ENCODE measurements at regions of chr9 and their contacts with region 1.

Region 1: DNA sequence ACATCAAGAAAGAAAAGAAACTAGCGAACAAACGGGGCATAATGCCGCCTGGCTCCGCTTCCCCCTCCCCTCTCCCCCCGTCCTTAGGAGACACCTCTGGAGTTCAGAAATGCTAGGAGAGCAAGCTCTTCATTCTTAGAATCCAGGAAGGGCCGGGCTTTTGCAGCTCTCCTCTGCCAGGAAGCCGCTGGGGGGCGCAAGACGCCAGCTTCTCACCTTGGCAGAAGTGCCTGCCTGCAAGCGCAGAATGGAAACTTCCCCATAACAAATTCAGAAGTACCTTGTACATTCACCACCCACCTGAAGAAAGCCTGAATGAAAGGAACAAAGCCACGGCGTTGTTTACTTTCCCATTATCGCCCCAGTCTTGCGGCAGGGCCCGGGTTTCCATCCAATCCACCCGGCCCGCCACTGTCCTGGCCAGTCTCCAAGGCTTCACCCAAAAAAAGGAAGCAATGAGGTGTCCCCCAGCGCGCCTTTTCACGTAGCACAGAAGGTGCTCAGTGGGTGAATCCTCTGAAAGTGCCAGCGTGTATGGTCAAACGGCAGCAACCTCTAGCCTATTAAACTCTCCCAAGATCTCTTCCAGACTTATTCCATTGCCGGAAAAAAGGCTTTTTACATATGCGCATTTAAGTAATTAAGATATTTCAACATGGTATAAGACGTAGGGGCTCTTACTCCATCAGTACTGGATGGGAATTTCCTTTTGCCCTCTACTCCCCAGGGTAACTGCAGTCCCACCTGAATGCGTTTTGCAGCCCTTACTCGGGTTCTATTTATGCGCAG is 1.6 kb upstream of the GADD45G start:
- DNase-seq: peak; percentile 82
- H3K4me3 Mint-ChIP-seq: peak overlapping the region; percentile 83
- H3K27ac Mint-ChIP-seq: peak overlapping the region; percentile 81
- H3K4me1 Mint-ChIP-seq: peaks cover 25% of the 10 kb centered on the region
- H3K27me3 Mint-ChIP-seq: peaks cover 19% of the 10 kb centered on the region

Region 2: DNA sequence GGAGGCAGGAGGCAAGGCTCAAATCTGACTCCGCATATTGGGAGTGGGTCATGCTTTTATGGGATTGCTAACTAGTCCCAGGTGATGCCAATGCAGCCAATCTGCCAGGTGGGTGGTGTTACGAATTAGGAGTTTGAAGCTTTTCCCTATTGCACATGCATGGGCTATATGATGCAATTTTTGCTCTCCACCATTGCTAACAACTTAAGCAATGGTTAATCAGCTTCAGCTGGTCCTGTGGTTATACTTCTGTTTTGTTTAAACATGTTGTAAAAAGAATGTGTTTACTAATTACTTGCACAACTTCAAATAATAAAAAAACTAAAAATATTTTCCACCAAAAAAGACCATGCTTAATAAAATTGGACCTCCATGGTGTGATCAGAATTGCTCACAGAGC is 480.2 kb before region 1 on chr9:
- intact Hi-C with region 1: no loop called
- DNase-seq: no peak
- H3K4me3 Mint-ChIP-seq: no peak overlapping the region
- H3K27ac Mint-ChIP-seq: no peak overlapping the region
- H3K4me1 Mint-ChIP-seq: no peaks in the 10 kb centered on the region
- H3K27me3 Mint-ChIP-seq: peaks cover 2% of the 10 kb centered on the region

Region 3: DNA sequence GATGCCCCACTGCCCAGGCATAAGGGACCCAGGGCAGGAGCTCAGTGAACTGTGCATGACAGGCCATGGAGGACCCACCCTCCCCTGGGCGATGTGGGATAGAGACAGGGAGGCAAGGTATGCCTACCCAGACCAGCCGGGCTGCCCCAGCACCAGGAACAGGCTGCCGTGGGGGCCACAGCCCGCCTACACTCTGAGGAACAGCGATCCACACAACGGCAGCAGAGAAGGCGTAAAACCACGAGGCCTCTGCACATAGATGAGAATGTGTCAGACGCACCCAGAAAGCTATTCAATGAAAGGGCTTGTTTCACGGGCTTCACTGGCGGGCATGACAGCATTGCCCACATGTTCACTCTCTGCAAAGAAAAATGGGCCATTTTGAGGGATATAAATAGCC is 154.8 kb before region 1 on chr9:
- intact Hi-C with region 1: no loop called
- DNase-seq: no peak
- H3K4me3 Mint-ChIP-seq: peak overlapping the region; percentile 26
- H3K27ac Mint-ChIP-seq: peak overlapping the region; percentile 90
- H3K4me1 Mint-ChIP-seq: peaks cover 84% of the 10 kb centered on the region
- H3K27me3 Mint-ChIP-seq: no peaks in the 10 kb centered on the region

Region 4: GRCh38 chr9:89657765-89658164 is 54.6 kb after region 1 on chr9:
- intact Hi-C with region 1: loop called (anchors 5 kb)
- DNase-seq: peak; percentile 47
- H3K4me3 Mint-ChIP-seq: no peak overlapping the region
- H3K27ac Mint-ChIP-seq: no peak overlapping the region
- H3K4me1 Mint-ChIP-seq: peaks cover 31% of the 10 kb centered on the region
- H3K27me3 Mint-ChIP-seq: peaks cover 15% of the 10 kb centered on the region

Region 5: DNA sequence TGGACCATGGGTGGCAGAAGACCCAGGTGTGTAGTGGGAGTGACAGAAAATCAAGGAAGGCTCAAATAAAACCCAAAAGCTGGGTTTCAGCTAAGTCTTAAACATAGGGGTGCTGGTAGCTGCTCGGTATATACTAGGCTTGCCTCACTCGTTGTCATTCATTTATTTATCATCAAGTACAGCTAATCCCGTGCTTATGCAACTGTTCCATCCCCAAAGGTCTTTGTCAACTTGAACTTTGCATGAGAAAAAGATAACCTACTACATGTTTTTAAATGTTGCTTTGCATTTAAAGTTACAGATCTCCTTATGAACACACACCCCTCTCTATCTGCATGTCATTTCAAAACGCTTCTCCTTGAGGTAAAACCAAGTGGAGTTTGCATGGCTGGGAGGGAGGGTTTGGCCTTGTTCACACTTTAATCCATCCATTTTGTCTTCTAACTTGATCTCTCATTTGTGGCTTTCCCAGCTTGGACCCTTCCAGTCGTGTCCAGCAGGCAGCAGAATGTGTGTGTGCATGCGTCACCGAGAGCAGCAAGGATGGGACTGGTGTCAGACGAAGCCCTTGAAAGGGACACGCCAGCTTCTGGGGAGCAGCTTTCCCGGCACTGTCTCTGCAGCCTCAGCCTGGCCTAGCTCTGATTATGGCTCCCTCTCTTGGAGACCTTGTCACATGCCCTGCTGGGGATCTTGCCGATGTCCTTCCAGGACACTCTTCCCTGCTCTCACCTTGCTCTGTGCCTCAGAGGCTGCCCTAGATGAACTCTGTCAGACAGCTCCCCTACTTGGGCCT is 135.2 kb after region 1 on chr9:
- intact Hi-C with region 1: loop called (anchors 1 kb)
- DNase-seq: no peak
- H3K4me3 Mint-ChIP-seq: no peak overlapping the region
- H3K27ac Mint-ChIP-seq: peak overlapping the region; percentile 90
- H3K4me1 Mint-ChIP-seq: peaks cover 64% of the 10 kb centered on the region
- H3K27me3 Mint-ChIP-seq: no peaks in the 10 kb centered on the region

Region 6: DNA sequence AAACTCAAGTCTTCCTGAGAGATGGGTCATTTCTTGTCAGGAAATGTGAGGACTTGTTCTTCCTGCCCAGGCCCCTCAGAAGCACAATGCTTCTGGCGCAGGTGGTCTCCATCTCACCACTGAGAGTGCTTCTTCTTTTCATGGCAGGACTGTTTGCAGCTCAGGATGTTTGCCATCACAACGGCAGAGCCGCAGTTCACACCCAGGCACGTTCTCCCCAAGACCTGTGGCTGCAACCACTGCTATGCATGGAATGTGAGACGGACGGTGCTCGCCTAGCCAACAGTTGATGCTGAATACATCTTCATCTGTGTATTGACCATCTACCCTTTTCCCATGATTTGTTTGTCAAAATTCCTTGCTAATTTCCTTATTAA is 217.9 kb after region 1 on chr9:
- intact Hi-C with region 1: loop called (anchors 10 kb)
- DNase-seq: no peak
- H3K4me3 Mint-ChIP-seq: no peak overlapping the region
- H3K27ac Mint-ChIP-seq: no peak overlapping the region
- H3K4me1 Mint-ChIP-seq: peaks cover 11% of the 10 kb centered on the region
- H3K27me3 Mint-ChIP-seq: peaks cover 7% of the 10 kb centered on the region

Region 7: GRCh38 chr9:89984214-89984613 is 381.0 kb after region 1 on chr9:
- intact Hi-C with region 1: loop called (anchors 2 kb)
- DNase-seq: no peak
- H3K4me3 Mint-ChIP-seq: peak overlapping the region; percentile 53
- H3K27ac Mint-ChIP-seq: peak overlapping the region; percentile 95
- H3K4me1 Mint-ChIP-seq: peaks cover 60% of the 10 kb centered on the region
- H3K27me3 Mint-ChIP-seq: peaks cover 20% of the 10 kb centered on the region

Region 8: GRCh38 chr9:90102292-90102901 is 499.2 kb after region 1 on chr9:
- intact Hi-C with region 1: loop called (anchors 1 kb)
- DNase-seq: peak; percentile 75
- H3K4me3 Mint-ChIP-seq: no peak overlapping the region
- H3K27ac Mint-ChIP-seq: no peak overlapping the region
- H3K4me1 Mint-ChIP-seq: peaks cover 11% of the 10 kb centered on the region
- H3K27me3 Mint-ChIP-seq: peaks cover 3% of the 10 kb centered on the region